A549 (cell line): ENCODE measurements at regions of chr1 and their contacts with region 1.

Region 1: GRCh38 chr1:67149179-67149770 is 14.5 kb upstream of the C1orf141 start:
- DNase-seq: peak; percentile 18 to 69
- ATAC-seq: peak; percentile 99
- H3K4me3 ChIP-seq: no peak overlapping the region
- H3K27ac ChIP-seq: no peak overlapping the region
- H3K4me1 ChIP-seq: 0 out of 3 replicates have a peak, but pooled peaks cover 3% of the 10 kb centered on the region
- CTCF ChIP-seq: peak; percentile 77
- EP300 ChIP-seq: no peak
- POLR2A ChIP-seq: no peak
- RAD21 ChIP-seq: peak; percentile 79 to 81

Region 2: GRCh38 chr1:66764994-66765578 is 384.2 kb before region 1 on chr1:
- CTCF ChIA-PET with region 1: interaction called, 23 read pairs
- POLR2A ChIA-PET with region 1: no interaction called
- DNase-seq: peak; percentile 14 to 38
- ATAC-seq: peak; percentile 59 to 76; a peak in 5 of 6 replicates
- H3K4me3 ChIP-seq: no peak overlapping the region
- H3K27ac ChIP-seq: no peak overlapping the region
- H3K4me1 ChIP-seq: no peaks in the 10 kb centered on the region
- CTCF ChIP-seq: peak; percentile 74
- EP300 ChIP-seq: no peak
- POLR2A ChIP-seq: no peak
- RAD21 ChIP-seq: peak; percentile 71 to 81

Region 3: DNA sequence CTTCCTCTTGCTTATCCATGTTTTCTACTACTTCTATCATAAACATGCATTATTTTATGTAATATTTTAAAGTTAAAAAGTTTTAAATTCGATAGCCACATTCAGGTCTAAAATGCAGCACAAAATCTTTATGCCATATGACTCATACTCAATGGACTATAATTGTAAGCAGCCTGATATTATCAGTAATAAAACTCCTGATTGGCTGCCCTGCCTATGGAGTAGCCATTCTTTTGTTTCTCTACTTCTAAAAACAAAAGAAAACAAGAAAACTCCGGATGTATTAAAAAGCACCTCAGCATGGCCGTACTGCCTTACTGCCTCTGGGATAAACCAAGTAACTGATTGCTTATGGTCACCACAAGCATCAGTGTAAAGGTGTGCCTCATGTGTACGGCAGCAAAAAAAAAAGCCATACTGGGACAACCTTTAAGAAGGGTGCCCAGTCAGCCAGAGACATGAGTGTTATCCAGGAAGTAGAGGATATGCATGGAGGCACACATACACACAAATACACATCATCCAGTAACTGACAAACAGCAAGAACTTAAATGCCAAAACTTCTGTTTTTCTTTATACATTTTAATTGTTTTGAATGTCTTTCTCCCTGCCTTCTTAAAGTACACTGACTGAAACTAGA is 104.5 kb before region 1 on chr1:
- CTCF ChIA-PET with region 1: interaction called, 10 read pairs
- POLR2A ChIA-PET with region 1: no interaction called
- DNase-seq: no peak
- ATAC-seq: no peak
- H3K4me3 ChIP-seq: no peak overlapping the region
- H3K27ac ChIP-seq: no peak overlapping the region
- H3K4me1 ChIP-seq: no peaks in the 10 kb centered on the region
- CTCF ChIP-seq: no peak
- EP300 ChIP-seq: no peak
- POLR2A ChIP-seq: no peak
- RAD21 ChIP-seq: no peak

Region 4: GRCh38 chr1:67114162-67114561 is 35.1 kb before region 1 on chr1:
- CTCF ChIA-PET with region 1: no interaction called
- POLR2A ChIA-PET with region 1: no interaction called
- DNase-seq: no peak
- ATAC-seq: no peak
- H3K4me3 ChIP-seq: no peak overlapping the region
- H3K27ac ChIP-seq: no peak overlapping the region
- H3K4me1 ChIP-seq: no peaks in the 10 kb centered on the region
- CTCF ChIP-seq: no peak
- EP300 ChIP-seq: no peak
- POLR2A ChIP-seq: no peak
- RAD21 ChIP-seq: no peak

Region 5: GRCh38 chr1:67124455-67124854 is 24.8 kb before region 1 on chr1:
- CTCF ChIA-PET with region 1: interaction called, 12 read pairs
- POLR2A ChIA-PET with region 1: no interaction called
- DNase-seq: no peak
- ATAC-seq: no peak
- H3K4me3 ChIP-seq: no peak overlapping the region
- H3K27ac ChIP-seq: no peak overlapping the region
- H3K4me1 ChIP-seq: no peaks in the 10 kb centered on the region
- CTCF ChIP-seq: no peak
- EP300 ChIP-seq: no peak
- POLR2A ChIP-seq: no peak
- RAD21 ChIP-seq: no peak

Region 6: GRCh38 chr1:67214420-67215174 is 65.3 kb after region 1 on chr1:
- CTCF ChIA-PET with region 1: interaction called, 15 read pairs
- POLR2A ChIA-PET with region 1: no interaction called
- DNase-seq: peak in 1 of 2 experiments; percentile 24
- ATAC-seq: peak in 1 of 2 experiments; percentile 75; a peak in 3 of 6 replicates
- H3K4me3 ChIP-seq: no peak overlapping the region
- H3K27ac ChIP-seq: no peak overlapping the region
- H3K4me1 ChIP-seq: no peaks in the 10 kb centered on the region
- CTCF ChIP-seq: peak; percentile 48
- EP300 ChIP-seq: no peak
- POLR2A ChIP-seq: no peak
- RAD21 ChIP-seq: 0 out of 5 replicates have a peak, but pooled peaks of 1 of the 2 experiments have one; percentile 15